ENCODE measurements at regions of chr14 and their contacts with region 1.

Region 1: GRCh38 chr14:100192672-100193416 is 33.4 kb upstream of the DEGS2 start:
- DNase-seq: peak; percentile 98 to 100 (median 100)
- ATAC-seq: peak; percentile 99
- H3K4me3 Mint-ChIP-seq: peak overlapping the region; percentile 26 to 80 (median 68)
- H3K27ac Mint-ChIP-seq: peak overlapping the region; percentile 85 to 97 (median 94)
- H3K4me1 Mint-ChIP-seq: peaks cover 8 to 14% (median 11%) of the 10 kb centered on the region in 4 donors
- H3K27me3 Mint-ChIP-seq: no peaks in the 10 kb centered on the region

Region 2: GRCh38 chr14:100067971-100068959 is 124.6 kb before region 1 on chr14:
- POLR2A ChIA-PET with region 1: interaction called, 12 read pairs
- DNase-seq: peak; percentile 61 to 93 (median 88)
- ATAC-seq: peak; percentile 54 to 59
- H3K4me3 Mint-ChIP-seq: peak overlapping the region; percentile 86 to 100 (median 98)
- H3K27ac Mint-ChIP-seq: peak overlapping the region; percentile 93 to 100 (median 99)
- H3K4me1 Mint-ChIP-seq: peaks cover 36 to 85% (median 73%) of the 10 kb centered on the region in 4 donors
- H3K27me3 Mint-ChIP-seq: no peaks in the 10 kb centered on the region

Region 3: DNA sequence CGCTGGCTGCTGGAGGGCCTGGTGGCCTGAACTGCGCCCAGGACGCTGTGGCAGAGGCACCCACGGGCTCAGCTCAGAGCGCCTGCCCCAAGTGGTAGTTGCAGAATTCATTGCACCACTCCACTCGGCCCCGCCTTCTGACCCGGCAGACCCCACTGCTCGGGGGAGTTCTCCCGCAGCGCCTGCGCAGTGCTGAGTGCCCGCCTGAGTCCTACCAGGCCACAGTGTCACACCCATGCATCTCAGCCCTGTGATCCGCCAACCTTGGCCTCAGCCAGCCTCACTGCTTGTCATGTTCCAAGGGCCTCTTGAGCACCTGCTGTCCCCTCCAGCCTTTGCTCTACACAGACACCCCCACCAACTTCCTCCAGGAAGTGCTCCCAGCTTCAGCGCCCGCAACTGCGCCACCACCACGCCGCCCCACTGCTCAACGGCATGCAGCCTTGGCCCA is 45.6 kb before region 1 on chr14:
- POLR2A ChIA-PET with region 1: interaction called, 33 read pairs
- DNase-seq: peak; percentile 56 to 92 (median 80)
- ATAC-seq: peak; percentile 74 to 82
- H3K4me3 Mint-ChIP-seq: peak overlapping the region; percentile 74 to 88 (median 84)
- H3K27ac Mint-ChIP-seq: peak overlapping the region; percentile 78 to 98 (median 92)
- H3K4me1 Mint-ChIP-seq: peaks cover 15 to 42% (median 29%) of the 10 kb centered on the region in 4 donors
- H3K27me3 Mint-ChIP-seq: no peaks in the 10 kb centered on the region

Region 4: DNA sequence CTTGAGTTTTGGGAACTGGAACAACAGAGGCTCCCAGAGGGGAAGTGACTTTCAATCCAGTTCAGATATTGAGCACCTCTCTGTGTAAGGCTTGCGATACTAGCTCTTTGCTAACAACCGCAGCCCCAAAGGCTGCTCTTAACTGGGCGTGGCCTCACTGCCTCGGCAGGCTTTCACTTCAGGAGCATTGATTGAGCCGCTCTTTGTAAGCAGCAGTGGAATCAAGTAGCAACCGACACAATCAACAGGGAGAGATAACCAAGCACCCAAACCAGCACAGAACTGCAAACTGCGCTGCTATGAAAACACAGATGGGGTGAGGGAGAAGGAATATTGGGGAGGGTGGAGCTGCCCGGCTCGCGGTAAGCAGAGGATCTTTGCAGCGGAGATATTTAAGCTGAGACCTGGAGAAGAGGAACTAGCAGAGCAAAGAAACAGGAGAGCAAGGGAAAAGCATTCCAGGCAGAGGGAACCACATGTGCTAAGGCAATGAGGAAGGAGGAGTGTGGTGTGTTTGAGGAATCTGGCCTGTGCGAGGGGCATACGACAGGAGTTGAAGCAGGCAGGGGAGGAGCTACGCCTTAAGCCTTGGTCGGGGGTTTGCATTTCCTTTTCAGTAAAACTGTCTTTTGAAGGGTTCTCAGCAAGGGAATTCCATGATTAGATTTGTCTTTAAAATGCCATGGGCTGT is 28.8 kb after region 1 on chr14:
- POLR2A ChIA-PET with region 1: interaction called, 63 read pairs
- DNase-seq: peak; percentile 45 to 82 (median 64)
- ATAC-seq: peak; percentile 93
- H3K4me3 Mint-ChIP-seq: no peak overlapping the region
- H3K27ac Mint-ChIP-seq: no peak overlapping the region
- H3K4me1 Mint-ChIP-seq: peaks cover 7 to 16% (median 14%) of the 10 kb centered on the region in 4 donors
- H3K27me3 Mint-ChIP-seq: no peaks in the 10 kb centered on the region

Region 5: DNA sequence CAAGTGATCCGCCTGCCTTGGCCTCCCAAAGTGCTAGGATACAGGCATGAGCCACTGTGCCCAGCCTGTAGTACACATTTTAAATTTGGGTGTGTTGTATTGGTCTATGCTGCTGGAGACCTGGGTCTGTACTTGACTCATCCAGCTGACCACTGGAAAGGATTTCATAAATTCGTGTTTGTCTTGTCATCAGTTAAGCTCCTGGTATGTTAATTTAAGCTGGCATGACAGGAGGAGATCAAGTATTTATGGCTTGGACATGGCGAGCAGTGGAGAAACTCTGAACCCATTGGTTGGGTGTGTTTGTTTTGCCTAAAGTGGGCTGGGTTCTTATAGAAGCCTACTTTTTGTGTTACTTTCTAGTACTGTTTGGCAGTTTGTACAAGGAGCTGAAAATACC is 70.3 kb after region 1 on chr14:
- POLR2A ChIA-PET with region 1: no interaction called
- DNase-seq: no peak
- ATAC-seq: no peak
- H3K4me3 Mint-ChIP-seq: peak overlapping the region in 5 of 10 donors; percentile 22 to 52 (median 28)
- H3K27ac Mint-ChIP-seq: peak overlapping the region; percentile 50 to 86 (median 70)
- H3K4me1 Mint-ChIP-seq: peaks cover 39 to 93% (median 84%) of the 10 kb centered on the region in 4 donors
- H3K27me3 Mint-ChIP-seq: no peaks in the 10 kb centered on the region